Activated CD8-positive, alpha-beta T cell treated with anti-CD3 and anti-CD28 coated beads for 36 hours (primary cell): ENCODE measurements at regions of chr11 and their contacts with region 1.

Region 1: GRCh38 chr11:1050581-1051355 is 14.2 kb upstream of the MUC6 start:
- DNase-seq: peak; percentile 83
- ATAC-seq: peak; percentile 100
- H3K4me3 Mint-ChIP-seq: no peak overlapping the region
- H3K27ac Mint-ChIP-seq: no peak overlapping the region
- H3K4me1 Mint-ChIP-seq: no peaks in the 10 kb centered on the region
- H3K27me3 Mint-ChIP-seq: peaks cover 8% of the 10 kb centered on the region
- CTCF ChIP-seq: peak; percentile 90

Region 2: DNA sequence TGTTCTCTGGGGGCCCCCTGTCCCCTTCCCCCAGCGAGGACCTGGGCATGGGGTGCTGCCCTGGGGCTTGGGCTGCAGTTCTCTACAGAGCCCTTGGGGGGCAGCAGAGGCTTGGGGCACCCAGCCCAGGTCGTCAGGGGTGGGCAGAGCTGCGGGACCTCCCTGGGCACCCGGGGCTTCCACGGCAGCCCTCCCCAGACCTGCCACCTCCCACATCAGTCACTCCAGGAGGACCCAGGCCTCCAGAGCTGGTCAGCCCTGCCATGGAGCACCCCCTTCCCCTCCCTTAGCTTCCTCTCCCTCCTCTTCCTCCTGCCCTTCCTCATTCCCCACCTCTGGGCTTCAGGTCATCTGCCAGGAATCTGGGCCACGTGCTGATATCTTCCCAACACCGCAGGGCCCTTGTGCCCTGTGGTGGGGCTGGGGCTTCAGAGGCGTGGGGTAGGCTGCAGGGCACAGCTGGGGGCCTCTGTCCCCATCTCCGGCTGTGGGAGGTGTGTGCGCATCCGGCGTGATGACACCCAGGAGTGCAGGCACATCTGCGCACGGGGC is 202.3 kb before region 1 on chr11:
- CTCF ChIA-PET with region 1: interaction called, 46 read pairs
- POLR2A ChIA-PET with region 1: interaction called, 5 read pairs
- intact Hi-C with region 1: loop called (anchors 5 kb)
- DNase-seq: peak; percentile 74
- ATAC-seq: peak; percentile 79
- H3K4me3 Mint-ChIP-seq: no peak overlapping the region
- H3K27ac Mint-ChIP-seq: no peak overlapping the region
- H3K4me1 Mint-ChIP-seq: peaks cover 20% of the 10 kb centered on the region
- H3K27me3 Mint-ChIP-seq: peaks cover 9% of the 10 kb centered on the region
- CTCF ChIP-seq: peak; percentile 97